ENCODE measurements at regions of chr1 and their contacts with region 1.

Region 1: DNA sequence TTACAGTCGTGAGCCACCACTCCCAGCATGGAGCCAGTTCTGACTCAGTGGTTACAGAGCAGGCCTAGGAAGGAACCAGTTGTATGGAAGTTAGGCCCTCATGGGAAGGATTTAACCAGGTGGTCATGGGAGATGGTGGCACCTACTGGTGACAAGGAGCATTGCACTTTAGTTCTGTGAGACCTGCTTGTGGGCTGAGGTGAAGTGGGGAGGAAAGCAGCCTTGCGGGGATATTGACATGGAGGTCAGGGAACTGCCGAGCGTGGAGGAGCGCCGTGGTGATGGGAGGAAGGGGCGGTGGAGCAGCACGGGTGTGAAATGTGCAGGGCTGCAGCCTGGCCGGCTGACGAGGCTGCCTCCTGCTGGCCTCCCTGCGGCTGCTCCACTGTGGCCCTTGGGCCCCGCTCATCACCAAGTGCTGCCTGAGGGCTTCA is 100.4 kb downstream of the GALNT2 start:
- DNase-seq: peak; percentile 33
- H3K4me3 ChIP-seq: no peak overlapping the region
- H3K27ac ChIP-seq: no peak overlapping the region
- H3K4me1 ChIP-seq: no peaks in the 10 kb centered on the region
- H3K27me3 ChIP-seq: peaks cover 0 to 1% of the 10 kb centered on the region in 2 experiments
- CTCF ChIP-seq: peak; percentile 62 to 66
- POLR2A ChIP-seq: no peak

Region 2: GRCh38 chr1:229661022-229661877 is 506.2 kb before region 1 on chr1:
- CTCF ChIA-PET with region 1: interaction called, 3 read pairs
- POLR2A ChIA-PET with region 1: no interaction called
- dilution Hi-C with region 1: no loop called
- intact Hi-C with region 1: loop called (anchors 1 kb)
- DNase-seq: peak; percentile 61
- H3K4me3 ChIP-seq: no peak overlapping the region
- H3K27ac ChIP-seq: no peak overlapping the region
- H3K4me1 ChIP-seq: peaks cover 17% of the 10 kb centered on the region
- H3K27me3 ChIP-seq: no peaks in the 10 kb centered on the region
- CTCF ChIP-seq: peak; percentile 82 to 92
- POLR2A ChIP-seq: no peak

Region 3: DNA sequence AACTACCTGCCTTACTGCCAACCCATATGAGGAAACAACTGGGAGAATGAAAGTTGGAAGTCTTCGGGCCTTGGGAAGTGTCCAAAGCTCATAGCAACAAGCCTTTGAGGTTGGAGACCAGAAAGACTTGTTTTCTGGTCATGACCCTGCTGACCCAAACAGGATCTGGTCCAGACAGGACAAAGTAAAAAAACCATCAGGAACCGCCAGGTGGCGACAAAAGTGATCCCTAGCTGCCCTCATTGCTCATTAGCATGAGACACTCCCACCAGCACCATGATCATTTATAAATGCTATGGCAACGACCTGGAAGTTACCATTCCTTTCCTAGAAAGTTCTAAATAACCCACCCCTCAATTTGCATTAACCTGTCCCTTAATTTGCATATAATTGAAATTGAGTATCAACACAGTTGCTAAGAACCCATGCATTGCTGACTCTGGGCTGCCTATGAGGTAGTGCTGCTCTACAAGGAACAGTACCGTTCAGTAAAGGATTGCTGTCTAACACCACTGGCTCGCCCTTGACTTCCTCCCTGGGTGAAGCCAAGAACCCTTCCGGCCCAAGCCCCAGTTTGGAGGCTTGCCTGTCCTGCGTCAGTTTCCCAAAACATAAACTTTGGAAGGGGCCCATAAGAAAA is 452.4 kb before region 1 on chr1:
- CTCF ChIA-PET with region 1: interaction called, 6 read pairs
- POLR2A ChIA-PET with region 1: no interaction called
- dilution Hi-C with region 1: no loop called
- intact Hi-C with region 1: loop called (anchors 1 kb)
- DNase-seq: peak; percentile 32
- H3K4me3 ChIP-seq: no peak overlapping the region
- H3K27ac ChIP-seq: no peak overlapping the region
- H3K4me1 ChIP-seq: no peaks in the 10 kb centered on the region
- H3K27me3 ChIP-seq: no peaks in the 10 kb centered on the region
- CTCF ChIP-seq: peak; percentile 30 to 33
- POLR2A ChIP-seq: no peak

Region 4: DNA sequence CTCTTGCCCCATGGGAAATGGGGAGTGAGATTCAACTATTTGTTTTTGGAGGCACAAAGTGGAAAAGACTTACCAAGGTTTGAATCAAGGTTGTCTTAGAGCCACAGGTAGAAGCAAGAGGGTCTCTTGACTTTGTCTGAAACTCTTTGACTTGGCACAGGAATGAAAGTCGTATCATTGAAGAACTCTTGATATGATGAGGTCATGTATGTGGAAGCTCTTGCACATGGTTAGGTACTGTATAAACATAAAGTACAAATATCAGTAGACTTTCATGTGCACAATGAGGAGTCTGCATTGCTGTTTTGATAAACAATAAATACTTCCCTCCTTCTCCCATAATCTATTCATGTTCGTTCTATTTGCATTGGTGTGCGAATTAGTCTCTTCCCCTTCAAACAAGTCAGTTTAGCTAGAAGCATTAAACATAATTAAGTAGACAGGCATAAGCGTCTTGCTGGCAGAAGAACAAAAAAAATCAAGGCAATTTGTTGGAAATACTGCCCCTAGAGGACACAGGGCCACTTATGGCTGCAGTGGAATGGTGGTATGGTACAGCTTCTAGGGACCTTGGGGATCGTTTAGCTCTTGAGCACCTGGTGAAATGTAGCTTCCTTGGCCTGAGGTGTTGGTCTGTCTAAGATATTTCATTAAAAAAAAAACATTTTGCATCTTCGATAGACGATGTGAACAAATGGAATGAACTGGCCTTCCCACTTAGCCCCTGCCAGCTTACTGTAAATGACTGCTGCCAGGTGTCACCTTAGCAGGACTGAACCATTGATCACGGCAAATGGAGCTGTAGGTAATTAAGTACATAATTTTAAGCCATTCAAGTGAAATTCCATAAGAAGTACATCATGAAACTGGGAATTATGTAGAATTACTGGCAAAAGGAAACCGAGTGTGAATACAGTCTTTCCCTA is 318.4 kb before region 1 on chr1:
- CTCF ChIA-PET with region 1: no interaction called
- POLR2A ChIA-PET with region 1: no interaction called
- dilution Hi-C with region 1: no loop called
- intact Hi-C with region 1: loop called (anchors 10 kb)
- DNase-seq: peak; percentile 36
- H3K4me3 ChIP-seq: no peak overlapping the region
- H3K27ac ChIP-seq: no peak overlapping the region
- H3K4me1 ChIP-seq: no peaks in the 10 kb centered on the region
- H3K27me3 ChIP-seq: no peaks in the 10 kb centered on the region
- CTCF ChIP-seq: peak; percentile 41 to 49
- POLR2A ChIP-seq: no peak

Region 5: GRCh38 chr1:229972600-229973296 is 194.7 kb before region 1 on chr1:
- CTCF ChIA-PET with region 1: no interaction called
- POLR2A ChIA-PET with region 1: no interaction called
- dilution Hi-C with region 1: no loop called
- intact Hi-C with region 1: loop called (anchors 1 kb)
- DNase-seq: peak; percentile 9
- H3K4me3 ChIP-seq: no peak overlapping the region
- H3K27ac ChIP-seq: no peak overlapping the region
- H3K4me1 ChIP-seq: no peaks in the 10 kb centered on the region
- H3K27me3 ChIP-seq: no peaks in the 10 kb centered on the region
- CTCF ChIP-seq: peak; percentile 9 to 37
- POLR2A ChIP-seq: no peak

Region 6: DNA sequence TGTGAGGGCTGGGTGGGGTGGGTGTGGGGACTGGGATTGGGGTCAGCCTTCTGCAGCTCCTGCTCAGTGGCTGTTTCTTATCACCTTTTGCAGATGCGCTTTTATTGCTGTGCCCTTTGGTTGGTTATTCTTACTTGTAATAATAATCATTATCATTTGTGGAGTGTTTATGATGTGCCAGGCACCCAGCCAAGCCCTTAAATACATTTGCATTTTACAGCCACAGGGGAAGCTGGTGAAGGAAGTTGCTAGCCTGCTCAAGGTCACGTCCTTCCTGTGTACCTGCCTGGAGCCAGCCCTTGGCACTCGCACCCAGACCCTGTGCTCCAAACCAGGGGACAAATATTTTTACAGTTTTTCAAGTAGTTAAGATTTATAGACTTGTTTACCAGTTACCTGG is 114.7 kb after region 1 on chr1:
- CTCF ChIA-PET with region 1: no interaction called
- POLR2A ChIA-PET with region 1: no interaction called
- dilution Hi-C with region 1: no loop called
- intact Hi-C with region 1: no loop called
- DNase-seq: peak; percentile 75
- H3K4me3 ChIP-seq: no peak overlapping the region
- H3K27ac ChIP-seq: no peak overlapping the region
- H3K4me1 ChIP-seq: peaks cover 5% of the 10 kb centered on the region
- H3K27me3 ChIP-seq: no peaks in the 10 kb centered on the region
- CTCF ChIP-seq: no peak
- POLR2A ChIP-seq: no peak